ENCODE measurements at regions of chr3 and their contacts with region 1.

Region 1: GRCh38 chr3:185176750-185177359 is 24.0 kb upstream of the C3orf70 start:
- DNase-seq: peak; percentile 33
- H3K4me3 Mint-ChIP-seq: no peak overlapping the region
- H3K27ac Mint-ChIP-seq: no peak overlapping the region
- H3K4me1 Mint-ChIP-seq: no peaks in the 10 kb centered on the region
- H3K27me3 Mint-ChIP-seq: peaks cover 6% of the 10 kb centered on the region

Region 2: DNA sequence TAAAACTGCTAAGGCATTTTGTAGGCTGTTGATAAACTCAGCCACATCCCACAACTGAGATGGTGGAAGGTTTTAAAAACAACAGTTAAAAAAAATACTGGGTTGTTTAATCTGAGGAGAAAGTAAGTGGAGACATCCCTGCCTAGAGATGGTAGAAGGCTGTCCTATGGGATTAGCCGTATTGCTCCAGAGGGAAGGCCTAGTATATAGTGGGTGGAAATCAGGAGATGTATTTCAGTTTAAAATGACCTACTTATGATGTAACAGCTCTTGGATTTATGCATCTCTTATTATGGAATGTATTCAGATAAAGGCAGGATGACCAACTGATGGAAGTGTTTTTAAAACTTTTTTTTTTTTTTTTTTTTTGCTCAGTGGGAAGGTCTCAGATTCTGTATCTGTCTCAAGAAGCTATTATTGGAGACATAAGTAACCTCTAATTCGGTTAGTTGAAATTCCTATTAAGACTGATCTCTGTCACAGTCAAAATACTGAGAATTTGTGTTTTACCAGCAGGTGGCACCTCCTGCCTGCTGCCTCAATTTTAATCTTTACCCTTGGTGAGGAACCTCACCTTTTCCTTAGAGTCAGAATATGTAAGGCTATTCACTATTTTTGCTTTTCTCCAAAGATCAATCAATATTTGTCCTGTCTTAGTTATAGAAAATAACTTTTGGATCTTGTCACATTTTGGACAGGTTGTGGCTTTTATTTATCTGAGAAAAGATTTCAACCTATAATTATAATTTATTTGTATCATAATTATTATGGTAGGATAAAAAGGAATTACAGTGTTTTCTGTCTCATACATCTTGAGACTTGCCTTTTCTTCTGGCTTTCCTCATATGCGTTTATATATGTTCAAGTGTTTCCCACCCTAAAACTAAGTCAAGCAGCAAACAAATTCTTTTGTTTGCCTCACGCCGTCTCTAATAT is 301.9 kb before region 1 on chr3:
- CTCF ChIA-PET with region 1: interaction called, 3 read pairs
- POLR2A ChIA-PET with region 1: no interaction called
- intact Hi-C with region 1: loop called (anchors 1 kb)
- DNase-seq: peak; percentile 17
- H3K4me3 Mint-ChIP-seq: no peak overlapping the region
- H3K27ac Mint-ChIP-seq: no peak overlapping the region
- H3K4me1 Mint-ChIP-seq: peaks cover 14% of the 10 kb centered on the region
- H3K27me3 Mint-ChIP-seq: no peaks in the 10 kb centered on the region

Region 3: GRCh38 chr3:185089343-185089742 is 87.5 kb before region 1 on chr3:
- CTCF ChIA-PET with region 1: no interaction called
- POLR2A ChIA-PET with region 1: no interaction called
- intact Hi-C with region 1: no loop called
- DNase-seq: no peak
- H3K4me3 Mint-ChIP-seq: no peak overlapping the region
- H3K27ac Mint-ChIP-seq: no peak overlapping the region
- H3K4me1 Mint-ChIP-seq: no peaks in the 10 kb centered on the region
- H3K27me3 Mint-ChIP-seq: peaks cover 4% of the 10 kb centered on the region

Region 4: DNA sequence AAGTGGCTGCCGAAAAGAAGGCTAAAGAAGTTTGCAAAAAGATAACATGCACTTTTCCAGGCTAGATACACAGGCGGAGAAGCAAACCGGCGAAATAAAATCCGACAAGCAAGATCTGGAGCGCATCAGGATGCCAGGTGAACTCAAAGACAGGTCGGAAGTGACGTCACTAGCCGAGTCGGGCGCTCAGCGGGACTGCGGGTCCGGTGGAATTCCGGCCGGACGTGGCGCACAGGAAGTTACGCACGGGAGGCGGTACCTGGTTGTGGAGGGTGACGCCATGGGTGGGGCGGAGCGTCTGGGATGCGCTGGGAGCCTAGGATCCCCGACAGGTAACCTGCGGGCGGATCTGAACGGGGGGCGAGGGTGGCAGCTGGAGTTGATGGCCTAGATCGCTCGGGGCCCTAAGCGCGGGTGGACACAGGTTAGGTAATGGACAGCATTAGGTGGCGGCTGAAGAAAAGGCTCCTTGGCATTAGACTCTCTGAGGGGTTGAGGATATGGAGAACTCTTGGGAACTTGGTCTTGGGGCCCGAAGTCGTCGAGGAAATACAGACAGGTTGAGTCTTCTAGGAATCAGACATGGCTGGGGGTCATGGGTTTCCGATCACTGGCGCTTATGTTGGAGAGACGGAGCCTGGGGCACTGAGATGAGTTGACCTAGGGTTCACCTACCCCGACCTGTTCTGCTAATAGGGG is 106.0 kb after region 1 on chr3:
- CTCF ChIA-PET with region 1: no interaction called
- POLR2A ChIA-PET with region 1: no interaction called
- intact Hi-C with region 1: no loop called
- DNase-seq: peak; percentile 96
- H3K4me3 Mint-ChIP-seq: peak overlapping the region; percentile 99
- H3K27ac Mint-ChIP-seq: peak overlapping the region; percentile 86
- H3K4me1 Mint-ChIP-seq: peaks cover 23% of the 10 kb centered on the region
- H3K27me3 Mint-ChIP-seq: peaks cover 10% of the 10 kb centered on the region